WTC11 (cell line): ENCODE measurements at regions of chr11 and their contacts with region 1.

Region 1: DNA sequence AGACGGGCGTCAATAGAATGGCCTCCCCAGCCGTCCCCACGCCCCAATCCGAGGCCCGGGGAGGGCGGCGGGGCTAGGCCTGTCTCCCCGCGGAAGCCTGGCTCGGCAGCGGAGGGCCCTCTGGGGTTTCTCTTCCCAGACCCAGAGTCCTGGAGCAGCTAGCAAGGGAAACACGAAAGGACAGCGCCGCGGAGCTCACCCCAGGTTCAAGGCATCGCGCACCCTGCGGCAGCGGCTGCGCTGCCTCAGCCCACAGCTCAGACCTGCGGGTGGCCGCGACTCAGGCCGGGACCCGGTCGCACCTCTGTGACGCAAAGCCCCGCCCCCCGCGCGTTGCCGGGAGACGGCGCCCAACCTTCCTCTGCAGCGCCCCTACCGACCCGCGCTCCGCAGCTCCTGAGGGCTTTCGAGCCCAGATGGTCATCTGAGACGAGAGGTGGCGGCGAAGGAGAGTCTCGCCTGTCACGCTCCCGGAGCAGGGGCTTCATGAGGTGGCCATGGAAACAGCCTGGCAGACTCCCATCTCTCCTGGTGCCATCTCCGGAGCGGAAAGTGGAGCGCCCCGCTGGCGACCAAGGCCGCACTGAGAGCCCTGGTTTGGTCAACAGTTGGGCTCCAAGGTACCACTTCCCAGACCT is at the start of gene RNF141:
- DNase-seq: peak; percentile 99
- ATAC-seq: peak; percentile 97
- H3K4me3 Mint-ChIP-seq: peak within 1 kb of the TSS; percentile 87
- H3K27ac Mint-ChIP-seq: peak within 1 kb of the TSS; percentile 60
- H3K4me1 Mint-ChIP-seq: peaks cover 15% of the 10 kb centered on the region
- H3K27me3 Mint-ChIP-seq: peaks cover 12% of the 10 kb centered on the region
- CTCF ChIP-seq: peak; percentile 31; the same call in 1 of the 2 replicates
- total RNA-seq, gene RNF141: 23.2 to 24.8 TPM (median 23.9 TPM) in 3 replicates

Region 2: DNA sequence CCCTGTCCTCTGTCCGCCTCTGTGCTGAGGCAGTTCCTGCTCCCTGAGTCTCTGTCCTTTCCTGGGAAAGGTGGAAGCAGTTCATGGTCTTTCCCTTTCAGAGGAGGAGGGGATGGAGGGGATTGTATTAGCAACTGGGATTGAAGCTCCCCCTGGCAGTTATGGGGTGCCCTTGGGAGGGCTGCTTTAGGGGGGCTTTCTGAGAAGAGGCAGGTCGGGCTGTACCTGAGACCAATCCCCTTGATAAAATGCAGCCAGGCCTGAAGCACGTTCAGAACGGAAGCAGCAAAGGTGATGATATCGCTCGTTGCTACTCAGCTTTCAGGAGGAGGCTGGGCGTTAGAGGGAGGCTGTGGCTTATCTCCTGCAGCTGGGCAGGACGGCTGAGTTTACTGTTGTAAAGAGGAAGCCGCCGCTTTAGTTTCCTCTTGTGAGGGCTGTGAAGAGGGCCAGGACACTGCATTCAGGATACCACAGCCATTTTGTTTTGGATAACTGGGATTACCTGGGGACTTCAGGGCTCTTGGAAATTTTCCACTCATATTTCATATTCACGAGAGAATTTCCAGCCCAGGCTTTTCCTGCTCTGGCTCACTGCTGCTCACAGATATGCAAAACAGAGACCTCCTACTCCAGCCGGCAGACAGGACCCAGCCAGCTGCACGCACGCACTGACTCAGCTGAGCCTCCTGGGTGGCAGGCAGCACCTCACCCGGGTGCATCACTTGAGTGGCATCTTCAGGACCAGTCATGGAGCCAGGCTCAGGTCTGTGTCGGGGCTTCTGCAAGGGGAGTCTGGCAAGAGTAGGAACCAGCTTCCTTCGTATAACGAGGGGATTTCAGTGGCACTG is 85.2 kb before region 1 on chr11:
- CTCF ChIA-PET with region 1: interaction called, 10 read pairs
- POLR2A ChIA-PET with region 1: no interaction called
- DNase-seq: peak; percentile 35
- ATAC-seq: peak; percentile 60
- H3K4me3 Mint-ChIP-seq: no peak overlapping the region
- H3K27ac Mint-ChIP-seq: peak overlapping the region; percentile 53
- H3K4me1 Mint-ChIP-seq: peaks cover 34% of the 10 kb centered on the region
- H3K27me3 Mint-ChIP-seq: peaks cover 20% of the 10 kb centered on the region
- CTCF ChIP-seq: no peak

Region 3: GRCh38 chr11:10511046-10511711 is 29.9 kb before region 1 on chr11:
- CTCF ChIA-PET with region 1: interaction called, 15 read pairs
- POLR2A ChIA-PET with region 1: no interaction called
- DNase-seq: peak; percentile 47
- ATAC-seq: peak; percentile 4; the same call in 1 of the 2 replicates
- H3K4me3 Mint-ChIP-seq: peak overlapping the region; percentile 18
- H3K27ac Mint-ChIP-seq: peak overlapping the region; percentile 19; the same call in 1 of the 2 replicates
- H3K4me1 Mint-ChIP-seq: no peaks in the 10 kb centered on the region; the same call in 1 of the 2 replicates
- H3K27me3 Mint-ChIP-seq: peaks cover 18% of the 10 kb centered on the region
- CTCF ChIP-seq: no peak